ENCODE measurements at regions of chr6 and their contacts with region 1.

Region 1: DNA sequence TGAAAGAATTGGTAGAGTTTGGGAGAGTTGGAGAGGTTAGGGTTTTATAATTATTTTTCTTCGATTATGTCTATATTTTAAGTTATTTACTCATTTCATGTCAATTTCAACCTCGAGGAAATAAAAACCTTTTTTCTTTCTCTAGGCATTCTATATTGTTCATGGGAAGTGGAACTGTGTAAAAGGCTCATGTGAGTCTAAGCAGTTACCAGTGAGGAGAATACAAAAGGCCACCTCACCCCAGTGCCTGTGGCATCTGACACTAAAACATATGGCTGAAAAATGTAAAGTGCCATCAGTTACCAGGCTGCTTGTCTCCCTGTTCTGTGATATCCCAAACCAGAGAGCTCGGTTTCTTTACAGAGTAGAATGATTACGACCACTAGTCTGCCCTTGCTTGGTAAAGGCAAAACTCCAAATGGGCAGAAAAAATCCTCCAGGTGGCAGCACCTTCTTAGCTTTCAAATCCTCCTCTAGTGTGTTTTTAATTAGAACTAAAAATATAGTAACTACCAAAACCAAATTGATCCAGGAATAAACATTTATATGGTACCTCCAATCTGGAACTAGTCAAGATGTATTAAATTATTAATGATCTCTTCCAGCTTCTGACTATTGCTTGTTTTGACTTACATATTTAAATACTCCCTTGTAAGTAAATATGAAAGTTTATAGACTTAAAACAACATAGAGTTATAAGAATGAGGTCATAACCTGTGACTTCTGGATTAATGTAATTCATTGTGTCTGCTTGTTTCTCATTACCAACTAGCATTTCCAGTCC is 122.6 kb upstream of the MCHR2 start:
- DNase-seq: peak; percentile 82
- H3K4me3 ChIP-seq: no peak overlapping the region
- H3K27ac ChIP-seq: no peak overlapping the region
- H3K4me1 ChIP-seq: no peaks in the 10 kb centered on the region
- H3K27me3 ChIP-seq: peaks cover 0 to 3% of the 10 kb centered on the region in 2 experiments
- CTCF ChIP-seq: peak; percentile 55 to 59
- POLR2A ChIP-seq: no peak

Region 2: DNA sequence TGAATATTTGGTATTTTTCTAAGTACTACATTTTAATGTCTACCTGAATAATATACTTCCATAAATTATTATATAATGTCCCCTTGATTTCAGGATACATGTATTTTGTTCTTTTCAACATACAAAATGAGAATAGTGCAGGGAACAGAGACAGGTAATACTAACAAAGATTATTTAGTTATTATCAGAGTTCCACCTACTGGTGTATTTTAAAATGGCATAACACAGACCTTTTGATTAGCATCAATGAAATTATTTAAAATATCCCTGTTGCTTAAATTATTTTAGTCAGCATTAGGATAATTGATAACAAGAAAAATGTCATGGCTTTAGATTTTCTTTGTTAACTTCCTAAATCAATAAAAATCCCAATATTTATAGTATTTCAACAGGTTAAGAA is 325.9 kb before region 1 on chr6:
- CTCF ChIA-PET with region 1: no interaction called
- POLR2A ChIA-PET with region 1: no interaction called
- dilution Hi-C with region 1: no loop called
- intact Hi-C with region 1: no loop called
- DNase-seq: no peak
- H3K4me3 ChIP-seq: no peak overlapping the region
- H3K27ac ChIP-seq: no peak overlapping the region
- H3K4me1 ChIP-seq: no peaks in the 10 kb centered on the region
- H3K27me3 ChIP-seq: peaks cover 3 to 5% of the 10 kb centered on the region in 2 experiments
- CTCF ChIP-seq: no peak
- POLR2A ChIP-seq: no peak

Region 3: GRCh38 chr6:99943846-99944245 is 172.8 kb before region 1 on chr6:
- CTCF ChIA-PET with region 1: no interaction called
- POLR2A ChIA-PET with region 1: no interaction called
- dilution Hi-C with region 1: no loop called
- intact Hi-C with region 1: no loop called
- DNase-seq: no peak
- H3K4me3 ChIP-seq: no peak overlapping the region
- H3K27ac ChIP-seq: no peak overlapping the region
- H3K4me1 ChIP-seq: no peaks in the 10 kb centered on the region
- H3K27me3 ChIP-seq: no peaks in the 10 kb centered on the region
- CTCF ChIP-seq: no peak
- POLR2A ChIP-seq: no peak

Region 4: DNA sequence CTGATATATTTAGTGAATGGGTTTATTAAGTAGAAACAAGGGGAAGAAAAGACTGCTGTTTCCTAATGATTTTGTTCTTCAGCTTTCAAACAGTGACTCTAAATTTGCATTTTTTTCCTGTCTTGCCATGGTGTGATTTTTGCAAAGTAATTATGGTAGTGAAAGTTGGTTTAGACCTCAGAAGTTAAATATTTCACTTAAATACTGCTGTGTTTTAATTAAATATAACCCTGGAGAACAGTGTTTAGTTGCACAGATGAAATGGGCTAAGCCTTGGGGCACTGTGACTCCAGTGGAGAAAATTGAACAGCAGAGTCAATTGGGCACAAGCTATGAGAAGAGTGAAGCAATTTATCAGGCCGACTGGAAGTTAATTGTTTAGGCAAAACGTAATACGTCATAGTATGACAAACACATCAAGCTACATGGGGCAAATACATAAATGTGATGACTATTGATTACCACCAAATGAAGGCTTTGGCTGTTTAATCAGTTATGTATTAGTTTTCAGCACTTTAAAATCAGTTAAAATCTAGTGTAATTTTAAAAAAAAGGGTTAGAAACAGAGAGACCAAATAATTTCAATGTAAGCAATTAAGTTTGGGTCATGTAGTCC is 11.4 kb before region 1 on chr6:
- CTCF ChIA-PET with region 1: interaction called, 24 read pairs
- POLR2A ChIA-PET with region 1: no interaction called
- dilution Hi-C with region 1: no loop called
- intact Hi-C with region 1: no loop called
- DNase-seq: no peak
- H3K4me3 ChIP-seq: no peak overlapping the region
- H3K27ac ChIP-seq: no peak overlapping the region
- H3K4me1 ChIP-seq: no peaks in the 10 kb centered on the region
- H3K27me3 ChIP-seq: peaks cover 11 to 25% of the 10 kb centered on the region in 2 experiments
- CTCF ChIP-seq: no peak
- POLR2A ChIP-seq: no peak

Region 5: DNA sequence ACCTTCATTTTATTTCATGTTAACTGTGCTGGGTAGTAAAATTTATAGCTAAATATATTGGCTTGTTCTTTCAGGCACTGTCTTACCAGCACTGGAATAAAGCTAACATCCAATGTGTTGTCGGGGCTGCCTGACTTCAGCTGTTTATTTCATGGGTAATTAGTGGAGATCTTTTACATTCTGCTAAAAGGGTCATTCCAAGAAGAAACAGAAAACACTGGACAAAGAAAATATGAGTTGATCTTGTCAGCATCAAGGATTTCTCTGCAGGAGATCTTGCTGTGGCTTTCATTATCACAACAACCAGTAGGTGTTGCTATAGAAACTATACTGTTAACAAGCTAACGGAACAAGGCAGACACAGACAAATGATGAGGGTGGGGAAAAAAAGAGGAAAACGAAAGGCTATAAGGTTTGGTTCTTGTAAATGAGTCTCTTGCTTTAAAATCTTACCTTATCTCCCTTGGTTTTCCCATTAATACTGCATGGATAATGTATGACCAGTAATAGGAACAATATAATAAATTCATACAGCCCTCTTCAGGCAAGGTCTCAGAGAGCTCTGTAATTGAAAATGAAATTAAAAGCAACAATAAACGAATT is 141.3 kb after region 1 on chr6:
- CTCF ChIA-PET with region 1: no interaction called
- POLR2A ChIA-PET with region 1: no interaction called
- dilution Hi-C with region 1: no loop called
- intact Hi-C with region 1: loop called (anchors 5 kb)
- DNase-seq: peak; percentile 75
- H3K4me3 ChIP-seq: peak overlapping the region in 2 of 3 experiments; percentile 7 to 50
- H3K27ac ChIP-seq: peak overlapping the region; percentile 50
- H3K4me1 ChIP-seq: peaks cover 12% of the 10 kb centered on the region
- H3K27me3 ChIP-seq: no peaks in the 10 kb centered on the region
- CTCF ChIP-seq: no peak
- POLR2A ChIP-seq: no peak

Region 6: GRCh38 chr6:100464903-100465700 is 348.5 kb after region 1 on chr6 and contains the start of gene SIM1:
- CTCF ChIA-PET with region 1: interaction called, 59 read pairs
- POLR2A ChIA-PET with region 1: no interaction called
- dilution Hi-C with region 1: loop called (anchors 25 kb)
- intact Hi-C with region 1: loop called (anchors 5 kb)
- DNase-seq: peak; percentile 91
- H3K4me3 ChIP-seq: peak within 1 kb of the TSS; percentile 25 to 51 (median 44)
- H3K27ac ChIP-seq: no peak within 1 kb of the TSS
- H3K4me1 ChIP-seq: peaks cover 21% of the 10 kb centered on the region
- H3K27me3 ChIP-seq: peaks cover 85 to 100% of the 10 kb centered on the region in 2 experiments
- CTCF ChIP-seq: no peak
- POLR2A ChIP-seq: no peak
- total RNA-seq, gene SIM1: 0.29 and 0.39 TPM in 2 replicates

Region 7: DNA sequence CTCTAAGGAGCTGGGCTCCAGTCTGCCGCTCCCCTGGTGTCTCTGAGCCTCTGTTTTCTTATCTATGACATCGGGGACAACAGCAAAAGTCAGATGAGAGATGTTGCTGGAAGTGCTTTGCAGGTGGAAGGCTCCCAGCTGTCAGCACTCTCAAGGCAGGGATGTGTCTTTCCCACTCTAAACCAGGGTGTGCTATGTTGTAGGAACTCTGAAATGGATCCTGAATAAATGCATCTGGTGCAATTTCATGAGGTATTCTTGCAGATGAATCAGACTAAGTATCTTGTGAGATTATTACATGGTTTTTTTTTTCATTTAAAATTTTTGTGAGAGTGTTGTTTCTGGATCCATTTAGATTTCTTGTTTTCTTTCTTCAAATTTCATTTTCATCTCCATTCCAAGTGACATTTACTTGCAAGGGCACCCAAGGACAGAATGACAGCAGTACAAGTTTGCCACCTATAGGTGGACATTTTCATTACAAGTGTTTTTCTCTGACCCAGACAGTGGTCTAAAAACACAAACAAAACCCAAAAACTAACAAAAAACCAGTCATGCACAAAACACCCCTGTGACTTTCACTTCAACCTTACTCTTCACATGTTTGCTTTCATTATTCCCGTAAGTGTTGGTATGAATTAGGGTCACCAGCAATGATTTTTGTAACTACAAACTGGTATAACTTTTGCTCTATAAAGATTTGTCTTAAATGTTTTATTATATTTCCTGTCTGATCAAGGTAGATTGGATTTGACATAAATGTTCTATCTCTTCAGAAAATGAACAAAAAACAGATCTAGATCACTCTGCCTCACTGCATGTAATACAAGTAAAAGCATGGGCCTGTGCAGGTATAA is 362.8 kb after region 1 on chr6:
- CTCF ChIA-PET with region 1: interaction called, 86 read pairs
- POLR2A ChIA-PET with region 1: no interaction called
- dilution Hi-C with region 1: loop called (anchors 25 kb)
- intact Hi-C with region 1: loop called (anchors 1 kb)
- DNase-seq: peak; percentile 68
- H3K4me3 ChIP-seq: no peak overlapping the region
- H3K27ac ChIP-seq: no peak overlapping the region
- H3K4me1 ChIP-seq: no peaks in the 10 kb centered on the region
- H3K27me3 ChIP-seq: peaks cover 0 to 5% of the 10 kb centered on the region in 2 experiments
- CTCF ChIP-seq: peak; percentile 40 to 55
- POLR2A ChIP-seq: no peak

Region 8: DNA sequence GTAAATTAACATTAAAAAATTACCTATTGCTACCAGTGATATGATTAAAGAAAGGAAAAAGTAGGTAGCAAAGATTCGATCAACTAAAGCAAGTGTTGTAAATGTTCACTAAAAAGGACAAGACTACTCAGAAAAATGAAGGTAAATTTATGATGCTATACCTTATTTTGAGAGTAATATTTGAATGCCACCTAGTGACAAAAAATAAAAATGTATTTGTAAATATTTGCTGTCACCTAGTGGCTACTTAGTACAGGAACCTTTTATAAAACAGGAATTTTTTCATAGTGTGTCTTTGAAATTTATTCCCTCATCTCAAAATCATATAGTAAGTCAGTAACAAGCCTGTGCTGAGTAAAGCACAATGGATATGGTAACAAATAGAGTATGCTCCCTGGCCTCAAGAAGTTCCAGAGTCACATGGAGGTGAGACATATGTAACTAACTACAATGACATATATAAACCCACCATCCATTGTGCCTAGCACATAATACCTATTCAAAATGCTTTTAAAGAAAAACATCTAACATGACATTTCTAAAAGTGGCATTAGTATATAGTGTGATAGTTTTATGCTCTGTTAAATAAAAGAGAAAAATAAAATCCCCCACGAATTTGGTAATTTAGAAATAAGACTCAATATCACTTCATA is 541.2 kb after region 1 on chr6:
- CTCF ChIA-PET with region 1: interaction called, 62 read pairs
- POLR2A ChIA-PET with region 1: no interaction called
- dilution Hi-C with region 1: no loop called
- intact Hi-C with region 1: loop called (anchors 1 kb)
- DNase-seq: peak; percentile 39
- H3K4me3 ChIP-seq: no peak overlapping the region
- H3K27ac ChIP-seq: no peak overlapping the region
- H3K4me1 ChIP-seq: no peaks in the 10 kb centered on the region
- H3K27me3 ChIP-seq: no peaks in the 10 kb centered on the region
- CTCF ChIP-seq: peak; percentile 22 to 29
- POLR2A ChIP-seq: no peak

Region 9: GRCh38 chr6:100719883-100720682 is 603.5 kb after region 1 on chr6:
- CTCF ChIA-PET with region 1: interaction called, 22 read pairs
- POLR2A ChIA-PET with region 1: no interaction called
- dilution Hi-C with region 1: no loop called
- intact Hi-C with region 1: no loop called
- DNase-seq: peak; percentile 76
- H3K4me3 ChIP-seq: peak overlapping the region; percentile 16 to 83 (median 53)
- H3K27ac ChIP-seq: peak overlapping the region; percentile 48
- H3K4me1 ChIP-seq: peaks cover 4% of the 10 kb centered on the region
- H3K27me3 ChIP-seq: no peaks in the 10 kb centered on the region
- CTCF ChIP-seq: peak; percentile 18 to 22
- POLR2A ChIP-seq: no peak

Region 10: GRCh38 chr6:101069191-101069795 is 952.7 kb after region 1 on chr6:
- CTCF ChIA-PET with region 1: no interaction called
- POLR2A ChIA-PET with region 1: no interaction called
- dilution Hi-C with region 1: no loop called
- intact Hi-C with region 1: no loop called
- DNase-seq: no peak
- H3K4me3 ChIP-seq: no peak overlapping the region
- H3K27ac ChIP-seq: no peak overlapping the region
- H3K4me1 ChIP-seq: no peaks in the 10 kb centered on the region
- H3K27me3 ChIP-seq: no peaks in the 10 kb centered on the region
- CTCF ChIP-seq: no peak
- POLR2A ChIP-seq: no peak